A673 (cell line): ENCODE measurements at regions of chr3 and their contacts with region 1.

Region 1: DNA sequence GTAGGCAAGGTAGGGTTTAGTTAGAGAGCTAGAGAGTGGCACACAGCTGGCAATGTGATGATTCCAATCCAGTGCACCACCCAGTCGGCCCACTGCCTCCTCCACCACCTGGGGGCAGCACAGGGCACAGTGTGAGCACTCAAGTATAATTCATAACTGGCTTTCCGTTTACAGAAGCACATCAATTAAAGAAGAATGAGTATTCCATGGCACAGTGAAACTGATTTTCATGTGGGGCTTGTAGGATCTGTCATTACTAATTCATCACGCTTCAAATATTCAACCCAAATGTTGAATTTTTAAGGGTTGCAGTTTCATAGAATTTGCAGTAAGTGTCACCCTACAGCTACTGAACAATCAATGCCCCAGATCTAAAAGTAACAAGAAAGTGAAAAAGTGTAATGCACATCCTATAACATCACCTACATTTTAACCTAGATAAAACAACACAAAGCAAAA is 149.9 kb downstream of the IGSF11 start:
- DNase-seq: peak; percentile 66
- H3K4me3 ChIP-seq: no peak overlapping the region
- H3K27ac ChIP-seq: no peak overlapping the region
- H3K4me1 ChIP-seq: no peaks in the 10 kb centered on the region
- H3K27me3 ChIP-seq: peaks cover 14% of the 10 kb centered on the region
- CTCF ChIP-seq: peak; percentile 95

Region 2: GRCh38 chr3:118272991-118273390 is 611.8 kb before region 1 on chr3:
- CTCF ChIA-PET with region 1: no interaction called
- POLR2A ChIA-PET with region 1: no interaction called
- intact Hi-C with region 1: no loop called
- DNase-seq: no peak
- H3K4me3 ChIP-seq: no peak overlapping the region
- H3K27ac ChIP-seq: no peak overlapping the region
- H3K4me1 ChIP-seq: no peaks in the 10 kb centered on the region
- H3K27me3 ChIP-seq: no peaks in the 10 kb centered on the region
- CTCF ChIP-seq: no peak

Region 3: DNA sequence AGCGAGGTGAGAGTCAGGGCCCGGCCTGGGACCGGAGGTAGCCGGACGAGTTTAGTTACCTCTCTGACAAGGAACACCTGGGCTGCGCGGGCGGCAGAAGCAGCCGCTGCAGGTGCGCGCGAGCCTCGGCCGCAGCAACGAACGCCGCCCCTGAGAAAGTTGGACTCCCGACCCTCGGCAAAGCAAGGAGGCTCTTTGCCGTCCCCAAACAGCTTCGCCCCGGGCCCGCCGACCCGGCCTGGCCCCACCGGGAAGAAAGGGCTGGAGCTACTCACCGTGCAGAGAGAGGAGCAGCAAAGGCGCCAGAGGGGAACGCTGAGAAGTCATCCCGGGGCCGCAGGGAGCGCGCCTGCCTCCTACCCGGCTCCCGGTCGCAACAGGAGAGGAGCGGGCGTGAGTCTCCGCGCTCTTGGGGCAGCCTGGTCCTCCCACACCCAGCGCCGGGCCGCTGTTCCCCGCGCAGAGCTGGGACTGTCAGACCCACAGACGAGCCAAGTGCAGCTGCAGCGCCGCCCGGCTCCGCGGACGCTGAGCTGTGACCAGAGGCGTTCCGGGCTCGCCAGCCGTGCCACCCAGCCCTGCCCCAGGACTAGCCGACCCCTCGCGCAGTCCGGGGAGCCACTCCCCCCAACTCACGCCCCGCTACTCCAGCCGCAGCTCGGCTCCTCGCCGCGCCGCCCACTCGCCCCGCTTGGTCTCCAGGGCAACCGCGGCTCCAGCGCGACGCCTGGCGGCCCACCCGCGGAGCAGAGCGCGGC is 149.7 kb after region 1 on chr3 and contains the start of gene IGSF11:
- CTCF ChIA-PET with region 1: interaction called, 9 read pairs
- POLR2A ChIA-PET with region 1: no interaction called
- intact Hi-C with region 1: loop called (anchors 2 kb)
- DNase-seq: peak; percentile 67
- H3K4me3 ChIP-seq: peak within 1 kb of the TSS; percentile 47
- H3K27ac ChIP-seq: no peak within 1 kb of the TSS
- H3K4me1 ChIP-seq: no peaks in the 10 kb centered on the region
- H3K27me3 ChIP-seq: peaks cover 60% of the 10 kb centered on the region
- CTCF ChIP-seq: peak; percentile 42
- total RNA-seq, gene IGSF11: not detected in 2 replicates

Region 4: GRCh38 chr3:119098619-119099222 is 213.9 kb after region 1 on chr3:
- CTCF ChIA-PET with region 1: interaction called, 16 read pairs
- POLR2A ChIA-PET with region 1: no interaction called
- intact Hi-C with region 1: loop called (anchors 1 kb)
- DNase-seq: peak; percentile 49
- H3K4me3 ChIP-seq: no peak overlapping the region
- H3K27ac ChIP-seq: no peak overlapping the region
- H3K4me1 ChIP-seq: no peaks in the 10 kb centered on the region
- H3K27me3 ChIP-seq: no peaks in the 10 kb centered on the region
- CTCF ChIP-seq: peak; percentile 78

Region 5: DNA sequence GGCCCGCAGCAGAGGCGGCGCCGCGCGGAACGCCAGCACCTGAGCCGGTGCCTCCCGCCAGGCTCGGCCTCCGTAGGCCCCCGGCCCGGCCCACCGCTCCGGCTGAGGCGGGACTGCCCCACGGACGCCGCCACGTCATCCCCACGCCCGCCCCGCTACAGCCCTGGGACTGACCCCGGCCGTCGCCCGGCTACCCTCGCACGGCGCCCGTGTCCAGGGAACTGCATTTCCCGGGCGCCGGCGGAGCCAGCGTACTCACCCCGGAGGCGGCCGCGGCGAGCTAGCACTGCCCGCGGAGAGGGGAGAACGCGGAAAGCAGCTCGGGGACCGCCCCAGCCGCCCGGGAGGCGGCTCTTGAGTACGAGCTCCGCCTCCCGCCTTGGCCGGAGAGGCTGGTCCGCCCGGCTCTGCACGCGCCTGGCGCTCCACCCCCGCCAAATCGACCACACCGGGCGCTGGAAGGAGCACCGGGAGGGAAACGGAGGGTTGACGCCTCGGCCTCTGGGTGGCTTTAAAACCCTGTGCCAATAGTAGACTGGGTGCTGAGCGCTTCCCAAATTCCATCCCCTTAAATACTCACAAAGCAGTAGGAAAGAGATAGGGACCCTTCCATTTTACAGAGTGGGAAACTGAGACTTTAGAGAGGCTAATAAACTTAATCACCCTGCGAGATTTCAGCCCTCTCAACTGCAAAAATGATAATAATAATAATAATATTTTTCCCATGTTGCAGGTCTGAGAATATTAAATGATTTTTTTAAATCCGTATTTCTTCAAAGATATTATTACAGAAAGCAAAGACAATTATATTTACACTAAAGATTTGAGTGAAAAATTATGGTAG is 356.0 kb after region 1 on chr3 and contains the start of gene B4GALT4:
- CTCF ChIA-PET with region 1: interaction called, 14 read pairs
- POLR2A ChIA-PET with region 1: no interaction called
- intact Hi-C with region 1: loop called (anchors 1 kb)
- DNase-seq: peak; percentile 87
- H3K4me3 ChIP-seq: peak within 1 kb of the TSS; percentile 83
- H3K27ac ChIP-seq: peak within 1 kb of the TSS; percentile 74
- H3K4me1 ChIP-seq: peaks cover 11% of the 10 kb centered on the region
- H3K27me3 ChIP-seq: no peaks in the 10 kb centered on the region
- CTCF ChIP-seq: no peak
- total RNA-seq, gene B4GALT4: 9.9 and 10.8 TPM in 2 replicates

Region 6: GRCh38 chr3:119388577-119388976 is 503.8 kb after region 1 on chr3:
- CTCF ChIA-PET with region 1: interaction called, 3 read pairs
- POLR2A ChIA-PET with region 1: no interaction called
- intact Hi-C with region 1: loop called (anchors 5 kb)
- DNase-seq: peak; percentile 45
- H3K4me3 ChIP-seq: no peak overlapping the region
- H3K27ac ChIP-seq: no peak overlapping the region
- H3K4me1 ChIP-seq: no peaks in the 10 kb centered on the region
- H3K27me3 ChIP-seq: no peaks in the 10 kb centered on the region
- CTCF ChIP-seq: peak; percentile 53